ENCODE measurements at regions of chr19 and their contacts with region 1.

Region 1: GRCh38 chr19:38229585-38230073 is 5.6 kb upstream of the DPF1 start:
- DNase-seq: peak; percentile 89
- CTCF ChIP-seq: no peak

Region 2: GRCh38 chr19:38115271-38115802 is 114.3 kb before region 1 on chr19:
- CTCF ChIA-PET with region 1: no interaction called
- POLR2A ChIA-PET with region 1: no interaction called
- DNase-seq: no peak
- CTCF ChIP-seq: no peak

Region 3: GRCh38 chr19:38245826-38246498 is 16.3 kb after region 1 on chr19:
- CTCF ChIA-PET with region 1: interaction called, 75 read pairs
- POLR2A ChIA-PET with region 1: no interaction called
- DNase-seq: no peak
- CTCF ChIP-seq: no peak

Region 4: GRCh38 chr19:38290631-38291157 is 61.1 kb after region 1 on chr19:
- CTCF ChIA-PET with region 1: no interaction called
- POLR2A ChIA-PET with region 1: no interaction called
- DNase-seq: no peak
- CTCF ChIP-seq: no peak

Region 5: GRCh38 chr19:38335949-38336637 is 106.5 kb after region 1 on chr19:
- CTCF ChIA-PET with region 1: interaction called, 28 read pairs
- POLR2A ChIA-PET with region 1: no interaction called
- DNase-seq: peak; percentile 94
- CTCF ChIP-seq: no peak